ENCODE measurements at regions of chr16 and their contacts with region 1.

Region 1: DNA sequence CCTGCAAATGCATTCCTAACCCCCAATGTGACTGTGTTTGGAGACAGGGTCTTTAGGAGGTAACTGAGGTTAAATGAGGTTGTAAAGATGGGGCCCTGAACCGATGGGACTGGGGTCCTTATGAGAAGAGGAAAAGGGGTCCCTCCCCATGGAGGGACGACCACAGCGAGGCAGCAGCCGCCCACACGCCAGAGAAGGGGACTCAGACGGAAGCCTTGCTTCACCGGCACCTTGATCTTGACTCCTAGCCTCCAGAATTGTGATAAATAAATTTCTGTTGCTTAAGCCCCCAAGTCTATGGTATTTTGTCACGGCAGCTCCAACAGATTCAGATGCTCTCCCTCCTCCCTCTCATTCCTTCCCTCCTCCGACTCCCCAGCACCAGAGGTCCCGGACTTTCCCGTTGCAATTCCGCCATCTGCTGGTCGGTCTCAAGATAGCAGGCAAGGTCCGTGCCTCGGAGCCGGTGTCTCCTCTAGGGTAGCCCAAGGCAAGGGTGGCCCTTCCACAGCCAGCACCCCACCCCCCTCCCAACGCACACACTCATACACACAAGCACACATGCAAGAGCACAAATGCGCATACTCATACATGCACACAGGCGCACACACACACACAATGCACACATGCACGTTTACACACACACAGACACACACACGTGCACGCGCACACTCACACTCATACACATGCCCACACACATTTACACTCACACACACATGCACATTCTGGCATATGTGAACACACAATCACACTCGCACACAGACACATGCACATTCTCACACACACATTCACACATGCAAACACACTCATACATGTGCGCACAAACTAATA is 23.1 kb upstream of the C16orf78 start:
- DNase-seq: no peak
- H3K4me3 ChIP-seq: no peak overlapping the region
- H3K27ac ChIP-seq: no peak overlapping the region
- H3K4me1 ChIP-seq: no peaks in the 10 kb centered on the region
- H3K27me3 ChIP-seq: peaks cover 0 to 16% (median 0%) of the 10 kb centered on the region in 3 donors
- CTCF ChIP-seq: peak; percentile 75 to 92 (median 81)
- EP300 ChIP-seq: no peak
- POLR2A ChIP-seq: no peak

Region 2: GRCh38 chr16:48687421-48688038 is 663.0 kb before region 1 on chr16:
- intact Hi-C with region 1: loop called (anchors 1 kb)
- DNase-seq: no peak
- H3K4me3 ChIP-seq: no peak overlapping the region
- H3K27ac ChIP-seq: no peak overlapping the region
- H3K4me1 ChIP-seq: no peaks in the 10 kb centered on the region
- H3K27me3 ChIP-seq: no peaks in the 10 kb centered on the region
- CTCF ChIP-seq: peak; percentile 54 to 82 (median 72)
- EP300 ChIP-seq: no peak
- POLR2A ChIP-seq: no peak

Region 3: GRCh38 chr16:48831076-48831722 is 519.3 kb before region 1 on chr16:
- intact Hi-C with region 1: loop called (anchors 10 kb)
- DNase-seq: no peak
- H3K4me3 ChIP-seq: no peak overlapping the region
- H3K27ac ChIP-seq: no peak overlapping the region
- H3K4me1 ChIP-seq: no peaks in the 10 kb centered on the region
- H3K27me3 ChIP-seq: no peaks in the 10 kb centered on the region
- CTCF ChIP-seq: no peak
- EP300 ChIP-seq: no peak
- POLR2A ChIP-seq: no peak

Region 4: DNA sequence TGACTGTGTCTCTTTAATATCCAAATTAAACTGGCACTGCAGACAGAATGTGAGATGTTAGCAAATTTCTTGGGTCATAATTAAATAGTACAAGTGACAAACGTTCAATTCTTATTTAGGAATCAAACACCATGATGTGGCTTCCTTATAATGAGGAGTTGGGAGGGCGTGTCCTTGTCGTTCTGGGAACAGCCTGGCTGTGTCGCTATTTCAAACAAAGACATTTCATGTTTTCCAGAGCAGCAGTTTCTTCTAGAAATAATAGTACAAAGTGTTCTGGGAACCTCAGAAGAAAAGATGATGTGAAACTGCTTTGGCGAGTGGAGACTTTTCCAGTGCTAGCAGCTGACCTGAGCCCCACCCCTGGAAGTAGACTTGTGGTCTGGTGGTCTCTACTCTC is 438.8 kb before region 1 on chr16:
- intact Hi-C with region 1: loop called (anchors 2 kb)
- DNase-seq: no peak
- H3K4me3 ChIP-seq: no peak overlapping the region
- H3K27ac ChIP-seq: no peak overlapping the region
- H3K4me1 ChIP-seq: peaks cover 0 to 13% (median 6%) of the 10 kb centered on the region in 4 donors
- H3K27me3 ChIP-seq: no peaks in the 10 kb centered on the region
- CTCF ChIP-seq: peak in 1 of 4 experiments; percentile 26
- EP300 ChIP-seq: no peak
- POLR2A ChIP-seq: no peak

Measured in sigmoid colon (tissue), 7 donors.